Endothelial cell of umbilical vein (primary cell): ENCODE measurements at regions of chr5 and their contacts with region 1.

Region 1: DNA sequence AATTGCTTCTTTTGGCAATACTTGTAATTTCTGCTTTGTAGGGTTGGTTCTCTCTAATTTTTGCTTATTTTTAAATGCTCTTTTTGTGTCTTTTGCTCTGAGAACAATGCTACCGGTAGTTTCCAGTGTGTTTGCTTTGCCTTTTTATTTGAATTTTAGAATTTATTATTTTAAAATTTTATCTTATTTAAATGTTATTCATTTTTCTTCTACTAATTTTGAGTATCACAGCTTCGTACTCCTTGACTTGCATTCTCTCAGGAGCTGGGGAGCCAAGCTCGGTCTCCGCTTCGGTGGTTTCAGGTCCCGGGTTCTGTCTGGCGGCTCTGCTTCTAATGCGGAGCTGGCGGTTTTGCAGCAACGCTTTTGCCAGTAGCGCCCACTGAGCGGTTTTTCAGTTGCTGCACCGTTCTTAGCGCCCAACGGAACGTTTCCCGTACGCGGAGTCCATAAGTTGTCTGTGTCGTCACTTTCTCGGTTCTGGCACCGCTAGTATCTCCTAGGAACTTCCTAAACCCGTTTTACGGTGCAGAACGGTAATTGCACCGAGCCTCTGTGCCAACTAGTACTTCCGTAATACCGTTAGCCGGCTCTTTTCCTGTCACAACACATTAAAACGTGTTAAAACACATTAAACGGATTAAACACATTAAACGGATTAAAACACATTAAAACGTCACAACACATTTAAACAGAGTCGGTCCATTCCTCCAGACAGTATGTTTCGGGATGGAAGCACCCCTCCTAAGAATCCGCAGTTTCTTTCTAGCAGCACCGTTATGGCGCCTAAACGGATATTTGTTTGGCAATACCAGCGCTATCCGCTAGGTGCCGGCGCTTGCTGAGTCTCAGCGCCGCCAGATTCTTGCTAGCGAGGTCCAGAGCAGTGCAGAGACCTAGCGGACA is 45.6 kb downstream of the ANXA2R start:
- DNase-seq: peak; percentile 96
- H3K4me3 ChIP-seq: peak overlapping the region; percentile 59 to 94 (median 61)
- H3K27ac ChIP-seq: peak overlapping the region; percentile 98
- H3K4me1 ChIP-seq: peaks cover 30% of the 10 kb centered on the region
- H3K27me3 ChIP-seq: no peaks in the 10 kb centered on the region
- CTCF ChIP-seq: peak; percentile 85 to 86
- POLR2A ChIP-seq: peak; percentile 52

Region 2: GRCh38 chr5:43008369-43009153 is 14.1 kb after region 1 on chr5:
- CTCF ChIA-PET with region 1: interaction called, 56 read pairs
- POLR2A ChIA-PET with region 1: interaction called, 6 read pairs
- dilution Hi-C with region 1: no loop called
- intact Hi-C with region 1: loop called (anchors 1 kb)
- DNase-seq: peak; percentile 96
- H3K4me3 ChIP-seq: peak overlapping the region; percentile 45 to 77 (median 75)
- H3K27ac ChIP-seq: peak overlapping the region; percentile 90
- H3K4me1 ChIP-seq: peaks cover 26% of the 10 kb centered on the region
- H3K27me3 ChIP-seq: no peaks in the 10 kb centered on the region
- CTCF ChIP-seq: peak in 1 of 2 donors; percentile 28
- POLR2A ChIP-seq: peak; percentile 66

Region 3: DNA sequence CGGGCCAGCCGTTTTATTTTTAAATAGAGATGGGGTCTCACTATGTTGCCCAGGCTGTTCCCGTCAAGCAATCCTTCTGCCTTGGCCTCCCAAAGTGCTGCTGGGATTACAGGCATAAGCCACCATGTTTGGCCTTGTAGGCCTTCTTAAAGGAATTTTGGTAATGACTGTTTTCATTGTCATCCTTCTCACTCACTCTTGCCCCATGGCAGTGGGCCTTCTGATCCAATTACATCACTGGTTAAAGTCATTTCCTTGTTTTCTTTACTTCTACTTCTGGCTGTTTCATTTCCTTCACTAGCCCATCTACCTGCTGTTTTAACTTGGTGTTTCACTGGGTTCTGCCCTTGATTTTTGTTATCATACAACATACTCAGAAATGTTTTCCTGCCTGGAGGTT is 177.4 kb after region 1 on chr5:
- CTCF ChIA-PET with region 1: no interaction called
- POLR2A ChIA-PET with region 1: no interaction called
- dilution Hi-C with region 1: no loop called
- intact Hi-C with region 1: no loop called
- DNase-seq: peak; percentile 15
- H3K4me3 ChIP-seq: no peak overlapping the region
- H3K27ac ChIP-seq: no peak overlapping the region
- H3K4me1 ChIP-seq: peaks cover 11% of the 10 kb centered on the region
- H3K27me3 ChIP-seq: no peaks in the 10 kb centered on the region
- CTCF ChIP-seq: no peak
- POLR2A ChIP-seq: no peak

Region 4: DNA sequence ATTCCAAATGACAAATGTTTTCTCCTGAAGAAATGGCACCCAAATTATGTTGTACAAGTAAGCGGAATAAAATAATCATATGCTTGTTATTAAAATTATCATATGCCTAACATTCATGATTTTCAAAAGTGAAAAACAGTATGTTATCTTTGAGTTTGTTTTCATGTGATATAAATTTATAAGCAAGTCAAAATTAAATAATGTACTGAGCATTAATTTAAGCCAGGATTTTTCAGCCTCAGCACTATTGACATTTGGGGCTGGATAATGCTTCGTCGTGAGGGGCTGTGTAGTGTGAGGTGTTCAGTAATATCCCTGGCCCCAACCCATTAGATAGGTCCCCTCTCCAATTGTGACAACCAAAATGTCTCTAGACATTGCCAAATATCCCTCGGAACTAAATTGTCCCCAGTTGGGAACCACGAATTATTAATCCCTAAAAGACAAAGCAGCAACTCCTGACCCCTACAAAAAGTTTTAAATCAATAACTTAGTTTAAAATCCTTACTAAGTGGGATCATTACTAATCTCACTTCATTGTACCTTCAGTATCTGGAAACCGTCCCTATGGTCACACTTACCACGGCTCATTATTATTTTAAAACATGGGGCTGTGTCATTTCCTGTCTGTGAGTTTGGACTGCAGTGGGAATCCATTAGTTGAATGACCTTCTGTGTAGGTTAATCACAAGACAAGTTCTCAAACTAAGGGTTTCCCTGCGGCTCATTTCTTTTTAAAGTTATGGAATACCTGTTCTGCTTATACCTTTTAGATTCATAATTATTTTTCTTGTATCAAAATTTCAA is 607.2 kb after region 1 on chr5:
- CTCF ChIA-PET with region 1: no interaction called
- POLR2A ChIA-PET with region 1: no interaction called
- dilution Hi-C with region 1: no loop called
- intact Hi-C with region 1: no loop called
- DNase-seq: peak; percentile 81
- H3K4me3 ChIP-seq: peak overlapping the region in 2 of 3 experiments; percentile 80 to 86
- H3K27ac ChIP-seq: peak overlapping the region; percentile 88
- H3K4me1 ChIP-seq: peaks cover 19% of the 10 kb centered on the region
- H3K27me3 ChIP-seq: no peaks in the 10 kb centered on the region
- CTCF ChIP-seq: no peak
- POLR2A ChIP-seq: no peak